Activated CD8-positive, alpha-beta T cell treated with anti-CD3 and anti-CD28 coated beads for 36 hours (primary cell): ENCODE measurements at regions of chr3 and their contacts with region 1.

Region 1: DNA sequence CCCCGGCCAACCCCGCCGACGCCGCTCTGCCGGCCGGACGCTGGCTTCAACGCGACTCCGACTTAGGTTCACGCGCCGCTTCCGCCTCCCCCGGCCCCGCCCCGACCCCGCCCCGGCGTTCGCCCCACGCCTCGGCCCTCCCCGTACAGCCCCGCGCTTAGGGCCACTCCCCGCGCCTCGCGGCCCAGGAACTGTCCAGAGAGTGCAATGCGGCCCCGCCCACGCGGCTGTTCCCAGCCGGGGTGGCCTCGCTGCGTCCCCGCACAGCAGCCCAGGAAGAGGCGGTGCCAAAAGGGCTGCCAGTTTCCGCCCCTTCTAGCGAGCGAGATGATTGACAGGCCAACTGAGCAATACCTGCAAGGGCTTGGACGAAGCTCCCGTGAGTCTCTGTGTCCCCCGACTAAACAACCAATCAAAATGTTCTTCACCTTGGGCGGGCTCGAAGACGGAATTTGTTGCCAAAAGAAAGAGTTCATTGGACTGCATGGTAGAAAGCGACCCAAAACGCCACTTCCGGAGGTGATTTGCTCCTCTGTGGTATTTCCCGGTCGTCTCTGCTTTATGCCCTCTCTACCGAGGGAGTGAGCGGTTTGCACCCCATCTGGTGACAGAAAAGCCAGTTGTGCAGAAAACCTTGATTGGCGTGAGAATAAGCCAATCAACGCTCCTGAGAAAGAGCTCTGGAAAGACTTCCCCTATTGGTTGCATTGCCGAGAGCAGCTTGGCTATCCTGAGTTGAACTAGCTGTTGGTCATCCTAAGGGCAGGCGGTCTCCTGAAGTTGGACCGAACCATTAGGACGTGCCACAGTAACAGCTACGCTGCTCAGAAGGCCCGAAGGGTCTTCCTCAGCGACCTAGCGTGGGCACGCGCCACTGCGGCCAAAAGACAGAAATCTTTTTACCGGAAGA is at the start of gene UBP1:
- DNase-seq: peak; percentile 99
- ATAC-seq: peak; percentile 90
- H3K4me3 Mint-ChIP-seq: peak within 1 kb of the TSS; percentile 94
- H3K27ac Mint-ChIP-seq: peak within 1 kb of the TSS; percentile 100
- H3K4me1 Mint-ChIP-seq: peaks cover 34% of the 10 kb centered on the region
- H3K27me3 Mint-ChIP-seq: no peaks in the 10 kb centered on the region
- CTCF ChIP-seq: no peak
- total RNA-seq, gene UBP1: 51.2 to 56.2 TPM

Region 2: GRCh38 chr3:33428734-33429133 is 11.8 kb before region 1 on chr3:
- CTCF ChIA-PET with region 1: interaction called, 5 read pairs
- POLR2A ChIA-PET with region 1: interaction called, 15 read pairs
- intact Hi-C with region 1: no loop called
- DNase-seq: no peak
- ATAC-seq: no peak
- H3K4me3 Mint-ChIP-seq: no peak overlapping the region
- H3K27ac Mint-ChIP-seq: peak overlapping the region; percentile 48
- H3K4me1 Mint-ChIP-seq: peaks cover 57% of the 10 kb centered on the region
- H3K27me3 Mint-ChIP-seq: no peaks in the 10 kb centered on the region
- CTCF ChIP-seq: no peak